Activated B cell treated with CpG ODN at 0.5 μM for 24 hours (primary cell): ENCODE measurements at regions of chr20 and their contacts with region 1.

Region 1: GRCh38 chr20:25623736-25624499 is at the start of gene NANP:
- DNase-seq: peak; percentile 88
- ATAC-seq: peak; percentile 84
- H3K4me3 Mint-ChIP-seq: peak within 1 kb of the TSS; percentile 92
- H3K27ac Mint-ChIP-seq: peak within 1 kb of the TSS; percentile 92
- H3K4me1 Mint-ChIP-seq: peaks cover 25% of the 10 kb centered on the region
- H3K27me3 Mint-ChIP-seq: no peaks in the 10 kb centered on the region
- CTCF ChIP-seq: no peak
- total RNA-seq, gene NANP: 2.3 and 2.7 TPM in 2 replicates

Region 2: GRCh38 chr20:25195014-25195961 is 428.6 kb before region 1 on chr20 and contains the start of gene ENTPD6:
- CTCF ChIA-PET with region 1: no interaction called
- POLR2A ChIA-PET with region 1: no interaction called
- intact Hi-C with region 1: loop called (anchors 5 kb)
- DNase-seq: peak; percentile 99
- ATAC-seq: peak; percentile 82
- H3K4me3 Mint-ChIP-seq: peak within 1 kb of the TSS; percentile 90
- H3K27ac Mint-ChIP-seq: peak within 1 kb of the TSS; percentile 86
- H3K4me1 Mint-ChIP-seq: peaks cover 20% of the 10 kb centered on the region
- H3K27me3 Mint-ChIP-seq: no peaks in the 10 kb centered on the region
- CTCF ChIP-seq: no peak
- total RNA-seq, gene ENTPD6: 37.2 and 44.4 TPM in 2 replicates

Region 3: GRCh38 chr20:25294459-25295385 is 329.2 kb before region 1 on chr20:
- CTCF ChIA-PET with region 1: no interaction called
- POLR2A ChIA-PET with region 1: no interaction called
- intact Hi-C with region 1: loop called (anchors 5 kb)
- DNase-seq: peak; percentile 54
- ATAC-seq: peak; percentile 92
- H3K4me3 Mint-ChIP-seq: no peak overlapping the region
- H3K27ac Mint-ChIP-seq: no peak overlapping the region
- H3K4me1 Mint-ChIP-seq: peaks cover 5% of the 10 kb centered on the region
- H3K27me3 Mint-ChIP-seq: no peaks in the 10 kb centered on the region
- CTCF ChIP-seq: no peak

Region 4: DNA sequence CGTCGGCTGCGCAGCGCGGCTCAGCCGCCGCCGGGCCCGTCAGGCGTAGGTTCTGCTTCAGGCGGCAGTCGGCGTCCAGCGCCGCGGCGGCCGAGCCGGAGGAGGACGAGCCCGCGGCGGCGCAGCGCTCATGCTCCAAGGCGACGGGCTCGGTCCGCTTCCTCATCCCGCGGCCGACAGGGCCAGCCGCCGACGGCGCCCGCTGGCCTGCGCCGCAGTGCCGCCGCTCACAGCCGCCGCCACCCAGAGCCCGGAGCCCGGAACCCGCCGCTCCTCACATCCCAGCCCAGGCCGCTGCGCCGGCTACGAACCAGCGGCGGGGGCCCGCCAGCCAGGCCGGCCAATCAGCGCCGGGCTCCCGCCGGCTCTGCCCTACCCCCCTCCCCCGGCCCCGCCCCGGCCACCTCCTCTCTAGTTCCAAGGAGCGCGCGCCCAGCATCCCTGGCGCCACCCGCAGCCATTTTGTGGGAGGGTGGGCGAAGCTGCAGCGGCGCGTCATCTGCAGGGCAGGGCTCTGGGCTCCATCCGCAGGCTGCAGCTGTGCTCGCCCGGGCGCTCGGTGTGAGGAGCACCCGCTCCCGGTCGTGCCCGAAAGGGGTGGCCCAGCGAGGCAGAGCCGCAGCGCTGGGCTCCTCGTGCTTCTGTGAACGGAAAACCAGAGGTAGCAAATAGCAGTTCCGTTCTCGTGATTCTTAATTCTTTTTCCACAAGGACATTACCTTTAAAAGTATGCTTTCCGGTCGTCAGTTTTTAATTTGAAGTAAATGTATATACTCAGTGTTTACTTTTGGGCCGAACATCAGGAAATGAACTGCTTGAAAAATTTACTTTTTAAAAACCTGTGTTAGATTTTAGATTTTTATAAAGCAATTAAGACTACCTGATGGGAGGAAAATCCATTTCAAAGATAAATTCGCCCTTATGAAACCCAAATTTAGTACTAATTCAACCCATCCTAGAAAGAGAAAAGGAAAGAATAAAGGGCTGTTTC is 233.1 kb before region 1 on chr20 and contains the start of gene ABHD12:
- CTCF ChIA-PET with region 1: no interaction called
- POLR2A ChIA-PET with region 1: no interaction called
- intact Hi-C with region 1: loop called (anchors 1 kb)
- DNase-seq: peak; percentile 85
- ATAC-seq: peak; percentile 93
- H3K4me3 Mint-ChIP-seq: peak within 1 kb of the TSS; percentile 85
- H3K27ac Mint-ChIP-seq: peak within 1 kb of the TSS; percentile 76
- H3K4me1 Mint-ChIP-seq: peaks cover 17% of the 10 kb centered on the region
- H3K27me3 Mint-ChIP-seq: no peaks in the 10 kb centered on the region
- CTCF ChIP-seq: no peak
- total RNA-seq, gene ABHD12: 16.1 and 16.3 TPM in 2 replicates

Region 5: GRCh38 chr20:25584905-25585704 is 38.8 kb before region 1 on chr20 and contains the start of gene NINL:
- CTCF ChIA-PET with region 1: no interaction called
- POLR2A ChIA-PET with region 1: no interaction called
- intact Hi-C with region 1: loop called (anchors 1 kb)
- DNase-seq: peak; percentile 38
- ATAC-seq: peak; percentile 79
- H3K4me3 Mint-ChIP-seq: peak within 1 kb of the TSS; percentile 61
- H3K27ac Mint-ChIP-seq: no peak within 1 kb of the TSS
- H3K4me1 Mint-ChIP-seq: peaks cover 4% of the 10 kb centered on the region
- H3K27me3 Mint-ChIP-seq: peaks cover 32% of the 10 kb centered on the region
- CTCF ChIP-seq: no peak
- total RNA-seq, gene NINL: 1.0 and 1.8 TPM in 2 replicates

Region 6: GRCh38 chr20:25669826-25670422 is 46.0 kb after region 1 on chr20:
- CTCF ChIA-PET with region 1: no interaction called
- POLR2A ChIA-PET with region 1: no interaction called
- intact Hi-C with region 1: no loop called
- DNase-seq: no peak
- ATAC-seq: no peak
- H3K4me3 Mint-ChIP-seq: no peak overlapping the region
- H3K27ac Mint-ChIP-seq: no peak overlapping the region
- H3K4me1 Mint-ChIP-seq: no peaks in the 10 kb centered on the region
- H3K27me3 Mint-ChIP-seq: no peaks in the 10 kb centered on the region
- CTCF ChIP-seq: no peak